Thyroid gland (tissue), 4 donors: ENCODE measurements at regions of chr6 and their contacts with region 1.

Region 1: GRCh38 chr6:52162940-52163908 is 23.0 kb upstream of the IL17A start:
- DNase-seq: no peak
- H3K4me3 ChIP-seq: no peak overlapping the region
- H3K27ac ChIP-seq: no peak overlapping the region
- H3K4me1 ChIP-seq: no peaks in the 10 kb centered on the region
- H3K27me3 ChIP-seq: no peaks in the 10 kb centered on the region
- CTCF ChIP-seq: peak; percentile 40 to 97 (median 81)
- POLR2A ChIP-seq: no peak

Region 2: GRCh38 chr6:52263709-52264540 is 100.7 kb after region 1 on chr6:
- intact Hi-C with region 1: loop called (anchors 5 kb)
- DNase-seq: peak; percentile 50 to 66
- H3K4me3 ChIP-seq: no peak overlapping the region
- H3K27ac ChIP-seq: no peak overlapping the region
- H3K4me1 ChIP-seq: no peaks in the 10 kb centered on the region
- H3K27me3 ChIP-seq: no peaks in the 10 kb centered on the region
- CTCF ChIP-seq: peak; percentile 77 to 97 (median 82)
- POLR2A ChIP-seq: no peak